Activated CD8-positive, alpha-beta T cell treated with anti-CD3 and anti-CD28 coated beads, Interleukin-2, amount 10 ng/mL, durations not matched to agents 7 days and 5 days (primary cell): ENCODE measurements at regions of chr3 and their contacts with region 1.

Region 1: DNA sequence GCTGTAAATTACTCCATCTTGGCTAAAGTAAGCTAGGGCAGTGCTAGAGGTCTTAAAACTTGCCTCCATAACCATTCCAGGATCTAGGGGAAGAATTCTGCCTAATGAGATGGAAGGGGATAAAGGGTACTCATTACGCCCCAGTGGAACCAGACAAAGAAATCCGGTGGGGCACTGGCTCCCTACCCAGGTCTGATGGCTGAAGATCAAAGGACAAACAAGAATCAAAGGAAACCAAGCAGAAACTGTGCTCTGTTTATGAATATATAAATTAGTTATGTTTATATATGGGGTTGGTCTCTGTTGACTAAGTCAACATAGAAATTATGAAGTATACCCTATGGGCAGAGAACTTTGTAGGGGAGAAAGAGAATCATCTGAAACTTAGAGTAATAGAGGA is 57.8 kb downstream of the NCEH1 start:
- DNase-seq: no peak
- ATAC-seq: no peak
- H3K4me3 Mint-ChIP-seq: no peak overlapping the region
- H3K27ac Mint-ChIP-seq: no peak overlapping the region
- H3K4me1 Mint-ChIP-seq: no peaks in the 10 kb centered on the region
- H3K27me3 Mint-ChIP-seq: no peaks in the 10 kb centered on the region

Region 2: GRCh38 chr3:171994646-171995428 is 658.2 kb before region 1 on chr3:
- CTCF ChIA-PET with region 1: no interaction called
- POLR2A ChIA-PET with region 1: no interaction called
- DNase-seq: no peak
- ATAC-seq: no peak
- H3K4me3 Mint-ChIP-seq: no peak overlapping the region
- H3K27ac Mint-ChIP-seq: no peak overlapping the region
- H3K4me1 Mint-ChIP-seq: peaks cover 24% of the 10 kb centered on the region
- H3K27me3 Mint-ChIP-seq: no peaks in the 10 kb centered on the region

Region 3: DNA sequence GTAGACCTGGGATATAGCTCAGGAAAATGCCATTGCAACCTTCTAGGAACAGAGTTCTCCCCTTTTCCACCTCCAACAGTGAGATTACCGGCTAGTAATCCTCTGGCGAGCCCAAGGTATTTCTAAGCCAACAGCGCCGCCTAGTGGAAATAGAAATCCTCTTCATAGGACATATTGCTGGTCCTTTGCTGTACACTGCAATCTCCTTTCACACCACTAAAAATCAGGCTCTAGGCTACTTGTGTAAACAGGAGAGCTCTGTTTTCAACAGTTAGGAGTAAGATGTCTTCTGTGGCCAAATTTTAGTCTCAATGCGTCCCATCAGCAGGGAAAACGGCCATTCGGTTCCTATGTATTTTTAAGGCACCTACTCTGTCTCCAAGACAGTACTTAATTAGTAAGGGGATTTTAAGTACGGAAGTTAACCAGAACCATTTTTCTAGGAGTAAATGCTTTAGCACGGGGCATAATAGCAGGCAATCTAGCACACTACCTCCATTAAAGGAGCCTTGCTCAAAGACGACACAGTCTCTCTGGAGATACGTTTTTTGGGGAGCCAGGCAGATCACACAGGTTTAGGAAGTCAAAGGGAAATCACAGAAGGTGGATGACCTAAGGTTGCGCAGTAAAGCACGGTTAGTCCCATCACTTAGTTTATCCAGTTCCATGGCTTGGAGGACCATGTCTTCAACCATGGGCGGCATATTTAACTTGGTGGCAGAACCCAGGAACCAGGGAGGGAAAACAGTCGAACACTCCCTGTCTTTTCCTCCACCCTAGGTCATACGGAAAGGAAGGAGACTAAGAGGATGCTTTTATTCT is 14.0 kb after region 1 on chr3:
- CTCF ChIA-PET with region 1: interaction called, 16 read pairs
- POLR2A ChIA-PET with region 1: no interaction called
- DNase-seq: peak; percentile 90
- ATAC-seq: peak; percentile 100
- H3K4me3 Mint-ChIP-seq: no peak overlapping the region
- H3K27ac Mint-ChIP-seq: no peak overlapping the region
- H3K4me1 Mint-ChIP-seq: peaks cover 19% of the 10 kb centered on the region
- H3K27me3 Mint-ChIP-seq: peaks cover 5% of the 10 kb centered on the region